ENCODE measurements at regions of chr3 and their contacts with region 1.

Region 1: DNA sequence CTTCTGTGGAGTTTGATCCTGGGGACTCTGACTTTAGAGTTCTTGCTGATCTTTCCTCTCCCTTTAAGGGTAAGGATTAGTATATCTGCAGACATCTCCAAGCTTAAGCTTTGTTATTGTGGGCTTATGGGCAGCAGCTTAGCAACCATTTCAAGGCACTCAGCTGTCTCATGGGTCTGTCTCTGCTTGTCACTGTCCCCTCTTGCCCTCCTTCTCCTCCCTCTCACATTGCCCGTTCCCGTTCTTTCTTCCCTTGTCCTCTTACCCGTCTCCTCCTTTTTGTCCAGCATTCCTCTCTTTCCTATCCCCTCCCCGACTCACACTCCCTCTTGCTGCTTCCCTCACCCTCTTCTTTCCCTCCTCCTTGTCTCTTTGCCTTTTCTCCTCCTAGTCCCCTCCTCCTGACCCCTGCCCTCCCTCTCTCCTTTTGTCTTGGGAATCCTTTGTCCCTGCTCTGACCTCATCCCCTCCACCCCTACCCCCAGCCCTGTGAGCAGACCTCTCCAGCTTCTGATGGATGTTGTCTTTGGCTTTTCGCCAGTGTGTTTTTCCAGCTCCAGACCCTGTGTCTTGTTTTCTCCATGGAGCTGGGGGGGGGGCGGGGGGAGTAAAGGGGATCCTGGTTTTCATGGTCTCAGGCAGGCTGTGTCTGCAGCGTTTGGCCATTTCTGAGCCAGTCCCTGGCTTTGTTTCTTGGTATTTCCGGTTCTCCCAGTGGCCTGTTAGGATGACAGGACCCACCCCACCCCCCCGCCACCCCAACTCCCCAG is 47.9 kb upstream of the TRAK1 start:
- DNase-seq: no peak
- ATAC-seq: no peak
- H3K4me3 ChIP-seq: no peak overlapping the region
- H3K4me3 Mint-ChIP-seq: peak overlapping the region; percentile 35
- H3K27ac ChIP-seq: peak overlapping the region in 1 of 2 donors; percentile 19
- H3K27ac Mint-ChIP-seq: peak overlapping the region; percentile 72
- H3K4me1 ChIP-seq: peaks cover 71 to 82% of the 10 kb centered on the region in 2 donors
- H3K4me1 Mint-ChIP-seq: peaks cover 74% of the 10 kb centered on the region
- H3K27me3 ChIP-seq: no peaks in the 10 kb centered on the region
- H3K27me3 Mint-ChIP-seq: no peaks in the 10 kb centered on the region
- CTCF ChIP-seq: no peak

Region 2: DNA sequence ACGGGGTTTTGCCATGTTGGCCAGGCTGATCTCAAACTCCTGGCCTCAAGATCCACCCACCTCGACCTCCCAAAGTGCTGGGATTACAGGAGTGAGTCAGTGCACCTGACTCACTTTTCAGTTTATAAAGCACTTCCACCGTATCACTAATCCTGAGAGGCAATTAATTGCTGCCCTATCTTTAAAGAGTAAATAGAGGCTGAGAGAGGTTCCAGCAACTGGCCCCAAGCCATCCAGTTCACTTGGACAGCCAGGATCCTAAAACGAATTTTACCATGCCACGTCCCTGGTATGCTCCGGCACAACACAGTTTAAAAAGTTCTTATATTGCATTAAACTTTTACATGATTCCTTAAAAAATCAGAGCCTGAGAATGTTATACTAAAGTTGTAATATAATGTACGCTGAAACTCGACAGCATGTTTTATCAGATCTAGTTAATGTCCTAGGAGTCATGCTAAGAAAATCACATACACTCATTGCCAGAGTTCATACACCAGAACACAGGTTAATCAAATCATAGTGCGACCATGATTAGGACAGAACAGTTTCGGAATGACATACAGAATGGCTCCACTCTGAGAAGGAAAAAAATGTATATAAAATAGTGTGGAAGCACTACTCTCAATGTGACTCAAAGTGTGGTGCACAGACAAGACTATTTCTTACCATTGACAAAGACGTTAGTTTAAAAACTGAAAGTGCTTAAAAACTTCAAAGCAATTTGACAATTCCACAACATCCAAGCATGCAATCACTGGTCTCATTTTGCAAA is 206.7 kb before region 1 on chr3:
- CTCF ChIA-PET with region 1: no interaction called
- POLR2A ChIA-PET with region 1: no interaction called
- intact Hi-C with region 1: no loop called
- DNase-seq: no peak
- ATAC-seq: no peak
- H3K4me3 ChIP-seq: no peak overlapping the region
- H3K4me3 Mint-ChIP-seq: no peak overlapping the region
- H3K27ac ChIP-seq: no peak overlapping the region
- H3K27ac Mint-ChIP-seq: no peak overlapping the region
- H3K4me1 ChIP-seq: no peaks in the 10 kb centered on the region
- H3K4me1 Mint-ChIP-seq: peaks cover 4% of the 10 kb centered on the region
- H3K27me3 ChIP-seq: no peaks in the 10 kb centered on the region
- H3K27me3 Mint-ChIP-seq: no peaks in the 10 kb centered on the region
- CTCF ChIP-seq: no peak

Region 3: GRCh38 chr3:42071904-42072592 is 28.8 kb after region 1 on chr3:
- CTCF ChIA-PET with region 1: interaction called, 4 read pairs
- POLR2A ChIA-PET with region 1: interaction called, 3 read pairs
- intact Hi-C with region 1: loop called (anchors 2 kb)
- DNase-seq: peak; percentile 55
- ATAC-seq: peak; percentile 14
- H3K4me3 ChIP-seq: peak overlapping the region in 4 of 5 experiments; percentile 12 to 36 (median 30)
- H3K4me3 Mint-ChIP-seq: peak overlapping the region; percentile 78
- H3K27ac ChIP-seq: peak overlapping the region; percentile 51 to 80
- H3K27ac Mint-ChIP-seq: peak overlapping the region; percentile 82
- H3K4me1 ChIP-seq: peaks cover 66 to 79% of the 10 kb centered on the region in 2 donors
- H3K4me1 Mint-ChIP-seq: peaks cover 82% of the 10 kb centered on the region
- H3K27me3 ChIP-seq: no peaks in the 10 kb centered on the region
- H3K27me3 Mint-ChIP-seq: no peaks in the 10 kb centered on the region
- CTCF ChIP-seq: no peak

Measured in B cell (primary cell).